Activated CD4-positive, alpha-beta T cell treated with anti-CD3 and anti-CD28 coated beads, Interleukin-2, amount 10 ng/mL, durations not matched to agents 7 days and 5 days (primary cell): ENCODE measurements at regions of chr17 and their contacts with region 1.

Region 1: DNA sequence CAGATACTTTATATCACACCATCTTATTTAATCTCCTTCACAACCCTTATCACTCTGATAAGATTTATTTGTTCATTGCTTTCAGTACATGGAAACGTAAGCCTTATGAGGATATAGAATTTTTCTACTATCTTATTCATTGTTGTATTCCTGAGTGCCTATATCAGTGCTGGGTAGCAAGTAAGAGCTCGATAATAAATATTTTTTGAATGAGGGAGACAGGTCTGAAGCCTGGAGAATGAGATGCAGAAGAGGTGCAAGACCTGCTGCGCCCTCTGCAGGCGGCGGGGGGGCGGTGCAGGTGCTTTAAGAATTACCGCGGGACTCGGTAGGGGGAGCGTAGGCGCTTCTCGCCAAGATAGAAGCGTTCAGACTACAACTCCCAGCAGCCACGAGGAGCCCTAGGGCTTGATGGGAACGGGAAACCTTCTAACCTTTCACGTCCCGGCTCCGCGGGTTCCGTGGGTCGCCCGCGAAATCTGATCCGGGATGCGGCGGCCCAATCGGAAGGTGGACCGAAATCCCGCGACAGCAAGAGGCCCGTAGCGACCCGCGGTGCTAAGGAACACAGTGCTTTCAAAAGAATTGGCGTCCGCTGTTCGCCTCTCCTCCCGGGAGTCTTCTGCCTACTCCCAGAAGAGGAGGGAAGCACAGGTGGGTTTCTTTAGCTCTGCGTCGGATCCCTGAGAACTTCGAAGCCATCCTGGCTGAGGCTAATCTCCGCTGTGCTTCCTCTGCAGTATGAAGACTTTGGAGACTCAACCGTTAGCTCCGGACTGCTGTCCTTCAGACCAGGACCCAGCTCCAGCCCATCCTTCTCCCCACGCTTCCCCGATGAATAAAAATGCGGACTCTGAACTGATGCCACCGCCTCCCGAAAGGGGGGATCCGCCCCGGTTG is at the start of gene WRAP53:
- DNase-seq: peak; percentile 97
- H3K4me3 Mint-ChIP-seq: peak within 1 kb of the TSS; percentile 92
- H3K27ac Mint-ChIP-seq: peak within 1 kb of the TSS; percentile 100
- H3K4me1 Mint-ChIP-seq: peaks cover 45% of the 10 kb centered on the region
- H3K27me3 Mint-ChIP-seq: no peaks in the 10 kb centered on the region
- total RNA-seq, gene WRAP53: 22.6 to 24.2 TPM

Region 2: DNA sequence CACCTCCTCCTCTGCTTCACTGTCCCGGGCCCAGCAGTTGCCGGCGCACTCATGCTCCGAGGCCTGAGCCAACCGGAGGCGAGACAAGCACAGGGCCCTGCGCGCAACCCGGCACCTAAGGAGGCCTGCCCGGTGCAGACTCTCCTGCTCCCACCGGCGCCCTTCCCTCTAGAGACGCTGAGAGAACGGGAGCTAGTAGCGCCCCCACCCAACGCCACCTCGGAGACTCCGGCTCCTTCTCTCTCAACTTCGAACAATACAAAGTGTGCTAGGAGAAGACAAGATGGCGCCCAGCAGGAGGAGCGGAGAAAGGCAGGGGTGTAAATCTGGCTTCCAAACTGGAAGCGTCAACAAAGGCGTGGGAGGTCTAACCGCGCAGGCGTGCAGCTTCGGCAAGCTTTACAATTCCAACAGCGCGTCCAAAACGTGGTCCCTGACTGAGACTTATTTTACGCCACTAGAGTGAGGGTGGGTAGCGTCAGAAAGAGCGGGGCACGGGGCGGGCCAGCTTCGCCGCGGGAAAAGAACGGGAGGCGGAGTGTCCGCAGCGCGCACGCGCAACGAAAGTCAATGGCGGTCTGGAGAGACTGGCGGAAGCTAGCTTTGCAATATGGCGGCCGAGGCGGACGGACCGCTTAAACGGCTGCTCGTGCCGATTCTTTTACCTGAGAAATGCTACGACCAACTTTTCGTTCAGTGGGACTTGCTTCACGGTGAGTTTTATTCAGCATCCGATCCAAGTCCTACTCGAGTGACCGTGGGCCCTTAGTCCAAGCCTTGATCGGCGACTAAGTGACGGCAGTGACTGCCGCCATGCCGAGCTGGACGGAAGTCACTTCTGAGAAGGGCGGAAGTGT is 104.7 kb before region 1 on chr17 and contains the start of gene MPDU1:
- CTCF ChIA-PET with region 1: interaction called, 15 read pairs
- POLR2A ChIA-PET with region 1: interaction called, 8 read pairs
- DNase-seq: peak; percentile 95
- H3K4me3 Mint-ChIP-seq: peak within 1 kb of the TSS; percentile 92
- H3K27ac Mint-ChIP-seq: peak within 1 kb of the TSS; percentile 99
- H3K4me1 Mint-ChIP-seq: peaks cover 63% of the 10 kb centered on the region
- H3K27me3 Mint-ChIP-seq: no peaks in the 10 kb centered on the region
- total RNA-seq, gene MPDU1: 62.3 to 81.7 TPM

Region 3: DNA sequence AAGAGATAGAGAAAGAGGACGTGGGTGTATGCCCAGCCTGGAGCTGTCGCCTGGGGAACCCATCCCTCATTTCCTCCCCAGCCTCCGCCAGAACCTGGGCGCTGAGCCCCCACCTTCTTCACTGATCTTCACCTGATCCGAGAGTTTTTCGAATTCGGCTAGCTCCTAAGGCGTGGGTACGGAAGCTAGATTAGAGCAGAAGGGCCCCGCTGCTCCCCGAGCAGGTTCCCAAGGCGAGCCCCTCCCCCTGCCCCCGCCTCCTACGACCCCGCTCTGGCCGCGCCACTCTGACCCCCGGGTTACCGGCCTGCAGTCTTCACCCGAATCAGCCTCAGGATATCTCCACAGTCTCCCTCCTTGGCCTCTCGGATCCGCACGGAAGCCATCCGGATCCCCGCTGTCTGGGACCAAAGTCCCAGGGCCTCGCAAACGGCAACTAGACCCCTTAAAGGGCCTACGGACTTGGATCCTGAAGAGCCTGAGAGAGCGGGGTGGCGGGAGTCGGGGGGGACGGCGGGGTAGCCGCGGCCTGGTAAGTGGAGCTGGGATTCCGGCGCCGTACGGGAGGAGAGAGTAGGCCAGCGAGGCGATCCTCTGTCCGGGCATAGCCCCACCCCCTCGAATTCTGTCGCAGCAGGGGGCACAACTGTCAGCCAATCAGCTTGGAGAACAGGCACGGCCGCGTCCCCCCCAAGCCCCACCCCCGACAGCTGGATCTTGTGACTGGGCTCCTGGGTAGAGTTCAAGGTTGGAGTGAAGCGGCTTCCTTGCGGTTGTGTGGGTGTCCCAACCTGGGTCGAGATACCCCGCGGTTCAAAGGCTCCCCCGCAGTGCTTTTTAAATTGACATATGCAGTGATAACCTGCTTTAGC is 60.7 kb before region 1 on chr17 and contains the start of gene SAT2:
- CTCF ChIA-PET with region 1: interaction called, 33 read pairs
- POLR2A ChIA-PET with region 1: interaction called, 4 read pairs
- DNase-seq: peak; percentile 87
- H3K4me3 Mint-ChIP-seq: peak within 1 kb of the TSS; percentile 91
- H3K27ac Mint-ChIP-seq: peak within 1 kb of the TSS; percentile 85
- H3K4me1 Mint-ChIP-seq: peaks cover 16% of the 10 kb centered on the region
- H3K27me3 Mint-ChIP-seq: no peaks in the 10 kb centered on the region
- total RNA-seq, gene SAT2: 18.5 to 23.6 TPM

Region 4: DNA sequence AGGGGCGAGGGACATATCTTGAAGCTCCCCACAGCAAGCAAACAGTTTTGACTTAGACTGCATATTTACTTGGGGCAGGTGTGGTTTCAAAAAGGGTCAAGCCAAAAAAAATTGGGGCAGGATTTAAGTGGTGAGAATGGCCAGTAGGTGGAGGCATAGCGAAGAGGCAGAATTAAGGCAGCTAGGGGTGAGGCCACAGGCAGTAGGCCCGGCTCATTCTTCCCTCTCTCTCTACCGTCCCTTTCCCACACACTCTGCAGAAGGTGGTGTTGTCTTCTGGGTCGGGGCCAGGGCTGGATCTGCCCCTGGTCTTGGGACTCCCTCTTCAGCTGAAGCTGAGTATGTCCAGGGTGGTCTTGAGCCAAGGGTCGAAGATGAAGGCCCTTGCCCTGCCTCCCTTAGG is 55.7 kb before region 1 on chr17:
- CTCF ChIA-PET with region 1: interaction called, 33 read pairs
- POLR2A ChIA-PET with region 1: interaction called, 4 read pairs
- DNase-seq: peak; percentile 50
- H3K4me3 Mint-ChIP-seq: no peak overlapping the region
- H3K27ac Mint-ChIP-seq: no peak overlapping the region
- H3K4me1 Mint-ChIP-seq: peaks cover 5% of the 10 kb centered on the region
- H3K27me3 Mint-ChIP-seq: no peaks in the 10 kb centered on the region

Region 5: GRCh38 chr17:7673239-7673638 is 14.9 kb before region 1 on chr17:
- CTCF ChIA-PET with region 1: interaction called, 17 read pairs
- POLR2A ChIA-PET with region 1: interaction called, 4 read pairs
- DNase-seq: peak; percentile 46
- H3K4me3 Mint-ChIP-seq: no peak overlapping the region
- H3K27ac Mint-ChIP-seq: no peak overlapping the region
- H3K4me1 Mint-ChIP-seq: peaks cover 4% of the 10 kb centered on the region
- H3K27me3 Mint-ChIP-seq: no peaks in the 10 kb centered on the region

Region 6: GRCh38 chr17:7703584-7704479 is 15.7 kb after region 1 on chr17:
- CTCF ChIA-PET with region 1: interaction called, 18 read pairs
- POLR2A ChIA-PET with region 1: no interaction called
- DNase-seq: no peak
- H3K4me3 Mint-ChIP-seq: no peak overlapping the region
- H3K27ac Mint-ChIP-seq: no peak overlapping the region
- H3K4me1 Mint-ChIP-seq: peaks cover 13% of the 10 kb centered on the region
- H3K27me3 Mint-ChIP-seq: peaks cover 40% of the 10 kb centered on the region

Region 7: GRCh38 chr17:7716901-7717755 is 29.0 kb after region 1 on chr17 and contains the start of gene DNAH2:
- CTCF ChIA-PET with region 1: interaction called, 12 read pairs
- POLR2A ChIA-PET with region 1: no interaction called
- DNase-seq: peak; percentile 44
- H3K4me3 Mint-ChIP-seq: peak within 1 kb of the TSS; percentile 72
- H3K27ac Mint-ChIP-seq: no peak within 1 kb of the TSS
- H3K4me1 Mint-ChIP-seq: peaks cover 28% of the 10 kb centered on the region
- H3K27me3 Mint-ChIP-seq: peaks cover 68% of the 10 kb centered on the region
- total RNA-seq, gene DNAH2: not detected

Region 8: GRCh38 chr17:7809086-7809790 is 121.1 kb after region 1 on chr17:
- CTCF ChIA-PET with region 1: no interaction called
- POLR2A ChIA-PET with region 1: no interaction called
- DNase-seq: no peak
- H3K4me3 Mint-ChIP-seq: no peak overlapping the region
- H3K27ac Mint-ChIP-seq: no peak overlapping the region
- H3K4me1 Mint-ChIP-seq: no peaks in the 10 kb centered on the region
- H3K27me3 Mint-ChIP-seq: peaks cover 6% of the 10 kb centered on the region